Dorsolateral prefrontal cortex (tissue), 120 donors: ENCODE measurements at regions of chr11 and their contacts with region 1.

Region 1: DNA sequence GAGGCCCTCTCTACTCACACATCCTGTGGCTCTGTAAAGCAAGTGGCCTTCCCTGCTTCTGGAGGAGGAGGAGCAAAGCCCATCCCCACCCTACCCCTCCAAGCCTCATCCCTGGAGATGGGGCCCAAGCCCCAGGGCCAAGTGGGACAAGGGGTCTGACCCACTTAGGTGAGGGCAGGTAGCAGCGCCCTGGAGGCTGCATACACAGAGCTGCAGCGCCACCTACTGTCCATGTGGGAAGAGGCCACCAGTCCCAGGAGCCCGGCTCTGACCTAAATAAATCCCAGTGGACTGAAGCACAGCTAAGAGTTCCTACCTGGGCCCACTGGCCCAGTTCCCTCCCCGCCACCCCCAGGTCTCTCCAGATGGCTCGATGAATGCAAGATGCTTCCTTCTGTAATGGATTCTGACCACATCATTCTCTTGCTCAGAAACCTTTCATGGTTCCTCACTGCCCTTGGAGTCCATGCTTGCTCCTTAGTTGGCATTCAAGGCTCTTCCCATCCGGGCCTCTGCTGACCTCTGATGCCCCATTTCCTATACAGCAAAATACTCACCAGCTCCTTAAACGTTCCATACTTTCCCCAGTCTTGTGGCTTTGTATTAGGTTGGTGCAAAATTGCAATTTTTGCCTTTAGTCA is 62.1 kb downstream of the THAP12 start:
- DNase-seq: peak; percentile 73 to 83 (median 78)
- H3K4me3 ChIP-seq: no peak overlapping the region
- H3K27ac ChIP-seq: no peak overlapping the region
- H3K27me3 ChIP-seq: peaks cover 0 to 32% (median 21%) of the 10 kb centered on the region in 45 donors
- CTCF ChIP-seq: peak; percentile 70 to 98 (median 91)

Region 2: GRCh38 chr11:75721855-75722668 is 596.8 kb before region 1 on chr11:
- intact Hi-C with region 1: loop called in 1 of 2 experiments (anchors 10 kb)
- DNase-seq: no peak
- H3K4me3 ChIP-seq: no peak overlapping the region
- H3K27ac ChIP-seq: peak overlapping the region in 1 of 59 donors; percentile 17
- H3K27me3 ChIP-seq: no peaks in the 10 kb centered on the region
- CTCF ChIP-seq: no peak

Region 3: GRCh38 chr11:75797792-75798191 is 521.1 kb before region 1 on chr11:
- intact Hi-C with region 1: loop called in 1 of 2 experiments (anchors 5 kb)
- DNase-seq: peak in 1 of 10 donors; percentile 26
- H3K4me3 ChIP-seq: no peak overlapping the region
- H3K27ac ChIP-seq: no peak overlapping the region
- H3K27me3 ChIP-seq: no peaks in the 10 kb centered on the region
- CTCF ChIP-seq: no peak

Region 4: GRCh38 chr11:75814686-75815344 is 504.0 kb before region 1 on chr11 and contains the start of gene UVRAG:
- intact Hi-C with region 1: loop called in 1 of 2 experiments (anchors 10 kb)
- DNase-seq: peak; percentile 98 to 99 (median 99)
- H3K4me3 ChIP-seq: peak within 1 kb of the TSS; percentile 71 to 99 (median 93)
- H3K27ac ChIP-seq: peak within 1 kb of the TSS; percentile 45 to 97 (median 92)
- H3K27me3 ChIP-seq: no peaks in the 10 kb centered on the region
- CTCF ChIP-seq: peak in 27 of 56 donors; percentile 7 to 56 (median 28)
- total RNA-seq, gene UVRAG: 29.8 to 76.8 (median 44.7) TPM

Region 5: GRCh38 chr11:75896843-75897419 is 421.9 kb before region 1 on chr11:
- intact Hi-C with region 1: loop called in 1 of 2 experiments (anchors 2 kb)
- DNase-seq: no peak
- H3K4me3 ChIP-seq: no peak overlapping the region
- H3K27ac ChIP-seq: peak overlapping the region in 26 of 59 donors; percentile 1 to 73 (median 43)
- H3K27me3 ChIP-seq: no peaks in the 10 kb centered on the region
- CTCF ChIP-seq: peak; percentile 66 to 96 (median 85)

Region 6: DNA sequence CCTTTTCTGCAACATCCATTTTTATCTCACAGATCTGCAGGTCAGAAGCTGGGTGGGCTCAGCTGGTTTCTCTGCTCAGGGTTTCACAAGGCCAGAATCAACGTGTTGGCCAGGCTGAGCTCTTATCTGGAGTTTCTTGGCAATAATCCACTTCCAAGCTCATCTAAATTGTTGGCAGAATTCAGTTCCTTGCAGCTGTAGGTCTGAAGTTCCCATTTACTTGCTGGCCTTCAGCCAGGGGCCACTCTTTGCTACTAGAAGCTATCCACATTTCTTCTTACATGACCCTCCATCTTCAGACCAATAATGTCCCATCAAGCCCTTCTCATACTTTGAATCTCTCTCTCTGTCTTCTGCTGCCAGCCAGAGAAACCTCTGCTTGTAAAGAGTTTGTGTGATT is 216.1 kb before region 1 on chr11:
- intact Hi-C with region 1: no loop called
- DNase-seq: no peak
- H3K4me3 ChIP-seq: no peak overlapping the region
- H3K27ac ChIP-seq: no peak overlapping the region
- H3K27me3 ChIP-seq: no peaks in the 10 kb centered on the region
- CTCF ChIP-seq: no peak